ENCODE measurements at regions of chr6 and their contacts with region 1.

Region 1: DNA sequence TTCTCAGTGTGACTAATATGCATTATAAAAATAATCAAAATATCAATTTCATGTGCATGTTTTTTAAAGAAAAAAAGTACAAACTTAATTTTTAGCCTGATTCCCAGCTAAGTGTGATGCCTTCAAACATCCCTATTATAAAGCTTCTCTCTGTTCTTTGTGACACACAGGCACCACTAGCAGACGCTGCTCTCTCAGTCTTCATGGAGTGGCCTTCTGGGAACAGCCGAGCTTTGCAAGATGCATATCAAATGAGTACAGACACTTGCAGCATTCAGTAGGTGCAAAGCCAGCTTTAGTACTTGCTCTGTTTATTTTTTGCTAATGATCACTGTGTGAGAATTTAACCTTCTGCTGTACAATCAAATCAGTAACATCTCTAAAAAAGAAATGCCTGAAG is 340.0 kb downstream of the ADGRB3 start:
- DNase-seq: no peak

Region 2: DNA sequence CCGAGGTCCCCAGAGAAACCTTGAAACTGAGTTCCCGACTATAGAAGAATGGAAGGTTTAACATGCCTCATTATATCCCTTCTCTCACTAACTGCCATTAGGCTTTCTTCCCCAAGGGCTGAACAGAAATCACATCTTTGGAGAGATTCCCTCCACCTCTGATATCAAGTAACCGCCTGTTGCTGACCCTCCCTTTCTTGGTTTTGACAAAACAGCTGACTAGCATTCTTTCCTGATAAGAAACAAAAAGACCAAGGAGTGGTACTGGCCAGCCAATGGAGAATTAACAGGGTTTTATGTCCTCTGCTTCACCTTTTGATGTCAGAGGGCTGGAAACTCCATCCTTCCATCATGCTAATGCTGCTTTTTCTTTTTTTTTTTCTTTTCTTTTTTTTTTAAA is 516.6 kb before region 1 on chr6:
- intact Hi-C with region 1: no loop called
- DNase-seq: no peak

Region 3: DNA sequence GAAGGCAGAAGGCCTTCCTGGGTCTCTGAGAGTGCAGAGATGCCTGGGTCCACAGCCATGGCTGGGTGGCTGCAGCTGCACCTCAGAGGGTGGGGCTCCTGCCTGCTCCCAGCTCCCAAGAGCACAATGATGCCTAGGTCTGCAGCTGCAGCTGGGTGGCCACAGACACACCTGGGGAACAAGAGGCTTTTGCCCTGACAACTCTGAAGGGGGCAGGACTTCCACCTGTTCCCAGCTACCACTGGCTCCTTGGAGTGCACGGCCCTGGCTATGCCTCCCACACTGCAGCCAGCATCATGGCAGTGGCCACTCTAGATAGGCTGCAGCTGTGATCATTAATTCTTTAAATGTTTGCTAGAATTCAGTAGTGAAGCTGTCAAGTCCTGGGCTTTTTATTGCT is 171.3 kb after region 1 on chr6:
- intact Hi-C with region 1: loop called (anchors 10 kb)
- DNase-seq: no peak

Region 4: DNA sequence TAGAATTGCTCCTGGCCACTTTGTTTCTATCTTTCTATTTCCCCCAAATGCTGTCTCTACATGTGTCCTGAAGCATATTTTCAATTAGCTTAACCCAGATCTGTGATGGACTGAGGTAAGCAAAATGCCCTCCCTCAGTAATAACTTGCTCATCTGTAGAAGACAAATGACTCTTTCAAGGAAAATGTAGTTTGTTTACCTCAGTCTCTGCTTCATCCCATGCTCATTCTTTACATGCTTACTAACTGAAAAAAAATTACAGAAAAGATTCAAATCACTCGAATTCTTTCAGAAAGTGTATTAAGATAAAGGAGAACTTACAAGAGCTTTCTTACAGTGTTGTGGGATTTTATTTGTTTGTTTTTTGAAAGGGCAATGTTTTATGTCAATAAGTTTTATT is 290.6 kb after region 1 on chr6:
- intact Hi-C with region 1: no loop called
- DNase-seq: no peak

Measured in cardiac septum (tissue), 1 donor.